Activated CD8-positive, alpha-beta T cell treated with anti-CD3 and anti-CD28 coated beads, Interleukin-2, amount 10 ng/mL, durations not matched to agents 7 days and 5 days (primary cell): ENCODE measurements at regions of chr10 and their contacts with region 1.

Region 1: GRCh38 chr10:44932517-44933450 is 21.6 kb downstream of the TMEM72 start:
- DNase-seq: peak; percentile 89
- ATAC-seq: peak; percentile 98
- H3K4me3 Mint-ChIP-seq: no peak overlapping the region
- H3K27ac Mint-ChIP-seq: peak overlapping the region; percentile 41
- H3K4me1 Mint-ChIP-seq: peaks cover 34% of the 10 kb centered on the region
- H3K27me3 Mint-ChIP-seq: no peaks in the 10 kb centered on the region

Region 2: DNA sequence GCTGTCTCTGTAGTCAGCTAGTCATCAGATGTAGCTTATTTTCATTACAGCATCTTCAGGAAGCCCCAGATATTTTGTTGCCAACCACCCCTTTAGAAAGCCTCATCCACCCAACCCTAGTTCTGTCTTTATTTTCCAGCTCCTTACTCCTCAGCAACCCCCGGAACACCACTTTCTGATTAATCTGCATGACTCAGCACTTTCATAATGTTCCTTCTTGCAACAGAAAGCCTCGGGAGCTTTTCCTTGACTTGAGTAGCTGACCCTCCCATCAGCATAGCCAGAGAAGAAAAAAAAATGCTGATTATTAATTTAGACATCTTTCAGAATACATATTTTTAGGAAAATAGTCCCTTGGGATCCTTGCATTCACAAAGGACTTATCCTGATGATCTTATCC is 303.9 kb before region 1 on chr10:
- CTCF ChIA-PET with region 1: no interaction called
- POLR2A ChIA-PET with region 1: no interaction called
- DNase-seq: no peak
- ATAC-seq: no peak
- H3K4me3 Mint-ChIP-seq: no peak overlapping the region
- H3K27ac Mint-ChIP-seq: no peak overlapping the region
- H3K4me1 Mint-ChIP-seq: no peaks in the 10 kb centered on the region
- H3K27me3 Mint-ChIP-seq: no peaks in the 10 kb centered on the region

Region 3: DNA sequence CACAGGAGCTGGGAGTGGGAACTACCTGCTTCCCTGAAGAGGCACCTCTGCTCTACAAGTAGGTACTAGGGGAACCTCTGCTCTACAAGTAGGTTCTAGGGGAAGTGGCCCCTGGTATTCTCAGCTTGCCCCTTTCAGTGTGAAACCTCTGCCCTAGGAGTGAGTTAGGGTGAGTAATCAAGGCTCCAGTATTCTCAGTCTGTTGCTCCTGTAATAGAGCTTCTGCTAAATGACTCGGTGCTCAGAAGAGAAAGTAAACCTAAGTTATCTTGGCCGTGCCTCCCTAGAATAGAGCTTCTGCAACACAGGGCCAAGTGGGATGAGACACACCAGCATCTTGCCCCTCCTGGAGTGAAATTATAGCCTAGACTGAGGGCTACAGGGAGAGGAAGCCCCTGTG is 13.4 kb after region 1 on chr10:
- CTCF ChIA-PET with region 1: interaction called, 16 read pairs
- POLR2A ChIA-PET with region 1: interaction called, 3 read pairs
- DNase-seq: no peak
- ATAC-seq: no peak
- H3K4me3 Mint-ChIP-seq: no peak overlapping the region
- H3K27ac Mint-ChIP-seq: no peak overlapping the region
- H3K4me1 Mint-ChIP-seq: no peaks in the 10 kb centered on the region
- H3K27me3 Mint-ChIP-seq: peaks cover 30% of the 10 kb centered on the region

Region 4: GRCh38 chr10:44952779-44953231 is 20.0 kb after region 1 on chr10:
- CTCF ChIA-PET with region 1: interaction called, 14 read pairs
- POLR2A ChIA-PET with region 1: interaction called, 3 read pairs
- DNase-seq: no peak
- ATAC-seq: no peak
- H3K4me3 Mint-ChIP-seq: no peak overlapping the region
- H3K27ac Mint-ChIP-seq: no peak overlapping the region
- H3K4me1 Mint-ChIP-seq: peaks cover 5% of the 10 kb centered on the region
- H3K27me3 Mint-ChIP-seq: no peaks in the 10 kb centered on the region

Region 5: DNA sequence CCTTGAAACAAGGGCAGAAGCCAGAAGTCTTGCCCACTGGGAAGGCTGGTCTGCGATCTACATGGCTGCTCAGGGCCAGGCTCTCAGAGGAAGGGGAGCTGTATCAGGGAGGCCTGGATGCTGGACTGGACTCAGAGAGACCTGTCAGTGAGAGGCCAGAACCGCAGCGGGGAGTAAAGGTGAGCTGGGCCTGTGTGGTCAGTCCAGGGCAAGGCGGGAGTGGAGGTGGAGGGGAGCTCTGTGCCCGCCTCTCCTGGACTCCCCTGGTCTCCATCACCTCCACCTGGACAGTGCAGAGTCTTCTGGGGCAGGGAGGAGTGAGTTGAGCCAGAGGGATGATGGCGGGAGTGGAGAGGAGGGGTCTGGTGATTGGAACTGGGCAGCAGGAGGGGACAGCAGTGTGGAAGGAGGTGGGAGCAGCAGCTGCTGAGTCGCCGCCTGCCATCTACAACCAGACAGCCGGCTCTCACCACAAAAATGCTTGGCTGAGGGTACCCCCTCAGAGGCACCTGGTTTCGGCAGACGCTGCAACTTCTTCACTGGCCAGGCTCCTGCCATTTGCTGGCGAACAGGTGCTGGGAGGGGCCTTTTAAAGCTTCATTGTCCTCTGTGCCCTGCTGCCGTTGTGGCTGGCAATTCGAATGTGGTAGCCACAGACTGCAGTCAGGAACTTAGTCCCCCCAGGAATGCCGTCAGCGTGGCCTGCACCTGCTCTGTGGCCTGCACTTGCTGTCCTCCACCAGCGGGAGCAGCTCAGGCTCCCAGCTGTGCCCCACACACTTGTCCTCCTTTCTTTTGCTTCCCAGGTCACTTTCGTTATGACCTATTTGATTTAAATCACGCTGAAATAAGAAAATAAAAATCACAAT is 30.3 kb after region 1 on chr10:
- CTCF ChIA-PET with region 1: interaction called, 53 read pairs
- POLR2A ChIA-PET with region 1: no interaction called
- DNase-seq: no peak
- ATAC-seq: no peak
- H3K4me3 Mint-ChIP-seq: no peak overlapping the region
- H3K27ac Mint-ChIP-seq: no peak overlapping the region
- H3K4me1 Mint-ChIP-seq: peaks cover 34% of the 10 kb centered on the region
- H3K27me3 Mint-ChIP-seq: no peaks in the 10 kb centered on the region

Region 6: GRCh38 chr10:44974628-44975431 is 42.0 kb after region 1 on chr10:
- CTCF ChIA-PET with region 1: interaction called, 35 read pairs
- POLR2A ChIA-PET with region 1: interaction called, 6 read pairs
- DNase-seq: peak; percentile 71
- ATAC-seq: peak; percentile 97
- H3K4me3 Mint-ChIP-seq: peak overlapping the region; percentile 71
- H3K27ac Mint-ChIP-seq: peak overlapping the region; percentile 87
- H3K4me1 Mint-ChIP-seq: peaks cover 28% of the 10 kb centered on the region
- H3K27me3 Mint-ChIP-seq: no peaks in the 10 kb centered on the region

Region 7: GRCh38 chr10:45000752-45001380 is 68.1 kb after region 1 on chr10 and contains the start of gene ZNF22:
- CTCF ChIA-PET with region 1: interaction called, 23 read pairs
- POLR2A ChIA-PET with region 1: interaction called, 3 read pairs
- DNase-seq: peak; percentile 83
- ATAC-seq: peak; percentile 87
- H3K4me3 Mint-ChIP-seq: peak within 1 kb of the TSS; percentile 94
- H3K27ac Mint-ChIP-seq: peak within 1 kb of the TSS; percentile 99
- H3K4me1 Mint-ChIP-seq: peaks cover 52% of the 10 kb centered on the region
- H3K27me3 Mint-ChIP-seq: peaks cover 3% of the 10 kb centered on the region
- total RNA-seq, gene ZNF22: 44.6 to 45.2 TPM

Region 8: DNA sequence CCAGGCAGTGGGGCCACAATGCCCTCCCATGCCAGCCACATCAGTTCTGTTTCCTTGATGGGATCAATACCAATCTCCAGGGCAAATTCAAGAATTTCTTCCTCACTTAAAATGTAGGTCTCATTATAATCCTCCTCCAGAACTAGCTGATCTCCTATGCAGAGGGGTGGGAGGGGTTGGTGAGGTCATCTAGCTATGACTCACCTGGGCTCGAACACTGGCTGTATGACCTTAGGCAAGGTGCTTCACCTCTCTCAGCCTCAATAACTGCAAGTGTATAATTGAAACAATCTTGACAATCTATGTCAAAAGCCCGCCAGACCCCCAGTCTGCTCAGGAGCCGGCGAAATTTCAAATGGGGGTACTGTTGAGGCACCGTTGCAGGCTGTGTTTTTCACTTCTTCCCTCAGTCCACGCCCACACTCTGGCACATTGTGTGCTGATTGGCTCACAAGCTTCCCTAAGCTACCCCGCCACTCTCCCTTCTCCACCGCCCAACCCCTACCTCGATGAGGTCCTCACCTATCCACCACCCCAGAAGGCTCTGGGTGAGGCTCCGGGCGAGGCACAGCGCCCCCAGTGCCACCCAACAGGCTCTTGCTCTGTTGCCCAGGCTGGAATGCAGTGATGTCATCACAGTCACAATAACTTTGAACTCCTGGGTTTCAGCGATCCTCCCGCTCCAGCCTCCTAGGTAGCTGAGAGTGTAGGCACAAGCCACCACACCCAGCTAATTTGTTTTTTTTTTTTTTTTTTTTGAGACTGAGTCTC is 138.4 kb after region 1 on chr10:
- CTCF ChIA-PET with region 1: no interaction called
- POLR2A ChIA-PET with region 1: no interaction called
- DNase-seq: no peak
- ATAC-seq: no peak
- H3K4me3 Mint-ChIP-seq: no peak overlapping the region
- H3K27ac Mint-ChIP-seq: no peak overlapping the region
- H3K4me1 Mint-ChIP-seq: no peaks in the 10 kb centered on the region
- H3K27me3 Mint-ChIP-seq: peaks cover 2% of the 10 kb centered on the region